Cardiac septum (tissue), 1 donor: ENCODE measurements at regions of chr16 and their contacts with region 1.

Region 1: DNA sequence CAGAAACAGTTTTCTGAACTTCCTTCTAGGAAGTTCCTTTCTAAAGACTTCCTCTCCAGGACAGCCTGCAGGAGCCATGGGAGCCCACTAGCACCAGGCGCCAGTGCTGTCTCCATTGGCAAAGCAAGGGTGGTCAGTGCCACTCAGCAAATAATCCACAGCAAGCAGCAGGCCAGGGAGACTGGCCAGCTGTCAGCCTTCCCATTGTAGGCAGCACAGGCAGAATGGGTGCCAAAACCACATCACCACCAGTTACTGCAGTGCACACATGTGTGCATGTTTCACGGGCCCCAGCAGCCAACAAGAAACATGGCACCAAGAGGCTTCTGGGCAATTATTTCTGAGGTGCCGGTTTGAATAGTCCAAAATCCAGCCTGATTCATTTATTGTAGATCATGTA is 26.7 kb downstream of the DNASE1 start:
- DNase-seq: no peak

Region 2: DNA sequence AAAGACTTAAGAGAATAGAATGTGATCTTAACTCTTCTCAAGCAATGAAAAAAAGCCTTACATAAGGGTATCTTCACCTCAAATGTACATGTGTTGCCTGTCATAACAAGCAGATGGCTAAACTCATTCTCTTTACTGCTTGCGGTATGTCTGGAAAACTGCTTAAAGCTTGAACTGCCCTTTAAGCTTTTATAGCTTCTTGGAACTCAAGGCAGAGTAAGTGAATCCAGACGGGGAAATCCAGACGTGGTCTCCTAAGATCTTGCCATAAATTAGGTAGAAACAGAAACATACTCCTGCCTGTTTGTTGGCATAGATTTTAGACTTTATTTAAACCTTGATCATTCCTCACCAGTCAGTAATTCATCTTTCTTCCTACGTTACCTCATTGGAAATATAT is 160.8 kb before region 1 on chr16:
- intact Hi-C with region 1: loop called (anchors 10 kb)
- DNase-seq: no peak

Region 3: GRCh38 chr16:3797904-3798811 is 117.0 kb after region 1 on chr16:
- intact Hi-C with region 1: no loop called
- DNase-seq: no peak